ENCODE measurements at regions of chr5 and their contacts with region 1.

Region 1: DNA sequence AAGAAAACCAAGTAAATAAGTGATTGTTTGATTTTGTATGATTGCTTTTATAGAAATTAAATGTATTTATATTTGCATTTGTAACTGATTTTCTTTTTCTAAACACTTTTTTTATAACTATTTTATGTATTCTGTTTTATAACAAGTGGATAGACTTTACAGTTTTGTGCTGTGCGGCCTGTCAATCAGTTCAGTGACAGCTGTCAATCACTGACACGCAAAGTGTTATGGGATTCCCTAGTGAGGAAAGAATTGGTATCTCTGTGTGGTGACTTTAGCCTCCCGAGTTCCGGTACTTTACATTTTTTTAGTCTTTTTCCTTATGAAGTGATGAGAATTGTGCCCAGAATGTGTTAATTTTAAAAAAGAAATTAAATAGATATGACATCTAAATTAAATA is 16.3 kb downstream of the GPR151 start:
- DNase-seq: no peak
- H3K4me3 Mint-ChIP-seq: no peak overlapping the region
- H3K27ac Mint-ChIP-seq: no peak overlapping the region
- H3K4me1 Mint-ChIP-seq: peaks cover 1% of the 10 kb centered on the region
- H3K27me3 Mint-ChIP-seq: no peaks in the 10 kb centered on the region

Region 2: GRCh38 chr5:146451411-146452073 is 48.1 kb before region 1 on chr5:
- CTCF ChIA-PET with region 1: interaction called, 4 read pairs
- POLR2A ChIA-PET with region 1: interaction called, 11 read pairs
- DNase-seq: no peak
- H3K4me3 Mint-ChIP-seq: no peak overlapping the region
- H3K27ac Mint-ChIP-seq: no peak overlapping the region
- H3K4me1 Mint-ChIP-seq: peaks cover 41% of the 10 kb centered on the region
- H3K27me3 Mint-ChIP-seq: no peaks in the 10 kb centered on the region

Region 3: GRCh38 chr5:146466521-146467349 is 32.9 kb before region 1 on chr5:
- CTCF ChIA-PET with region 1: no interaction called
- POLR2A ChIA-PET with region 1: no interaction called
- DNase-seq: no peak
- H3K4me3 Mint-ChIP-seq: no peak overlapping the region
- H3K27ac Mint-ChIP-seq: no peak overlapping the region
- H3K4me1 Mint-ChIP-seq: peaks cover 22% of the 10 kb centered on the region
- H3K27me3 Mint-ChIP-seq: no peaks in the 10 kb centered on the region